Heart left ventricle (tissue), 16 donors: ENCODE measurements at regions of chr5 and their contacts with region 1.

Region 1: DNA sequence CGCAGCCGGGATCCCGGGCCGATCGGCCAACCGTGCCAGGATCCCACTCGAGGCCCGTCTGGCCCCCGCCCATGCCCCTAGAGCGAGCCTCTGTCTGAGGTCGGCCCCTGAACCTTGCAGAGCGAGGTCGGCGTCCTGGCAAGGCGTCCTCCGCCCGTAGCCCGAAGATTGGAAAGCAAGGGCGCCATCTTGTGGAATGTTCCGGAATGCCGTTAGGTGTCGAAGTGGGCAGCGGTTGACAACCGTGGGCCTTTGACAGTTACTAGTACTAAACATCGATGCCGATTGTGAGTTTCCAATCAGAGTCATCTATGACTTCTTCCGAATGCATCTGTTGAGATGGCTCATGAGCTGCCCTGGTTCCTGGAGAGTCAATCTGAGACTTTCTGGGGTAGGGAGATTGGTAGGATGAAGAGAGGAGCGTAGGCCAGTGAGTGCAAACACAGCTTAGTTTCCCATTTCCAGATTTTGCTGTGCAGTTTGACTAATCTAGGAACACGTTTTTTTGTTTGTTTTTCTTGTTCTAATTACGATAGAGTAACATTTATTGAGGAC is 923 bp upstream of the PLK2 start:
- DNase-seq: peak; percentile 91 to 95 (median 93)
- ATAC-seq: peak; percentile 81 to 86 (median 82)
- H3K4me3 ChIP-seq: peak overlapping the region; percentile 59 to 97 (median 85)
- H3K27ac ChIP-seq: peak overlapping the region; percentile 93 to 99 (median 98)
- H3K4me1 ChIP-seq: peaks cover 0 to 24% (median 9%) of the 10 kb centered on the region in 12 donors
- H3K27me3 ChIP-seq: no peaks in the 10 kb centered on the region
- CTCF ChIP-seq: peak; percentile 71 to 88 (median 82)
- POLR2A ChIP-seq: no peak

Region 2: GRCh38 chr5:56909294-56910209 is 1551.3 kb before region 1 on chr5 and contains the start of gene SETD9:
- intact Hi-C with region 1: loop called in 1 of 10 experiments (anchors 10 kb)
- DNase-seq: peak; percentile 99 to 100 (median 99)
- ATAC-seq: peak; percentile 95 to 97 (median 97)
- H3K4me3 ChIP-seq: peak within 1 kb of the TSS; percentile 51 to 86 (median 68)
- H3K27ac ChIP-seq: peak within 1 kb of the TSS; percentile 85 to 99 (median 95)
- H3K4me1 ChIP-seq: peaks cover 0 to 16% (median 9%) of the 10 kb centered on the region in 12 donors
- H3K27me3 ChIP-seq: no peaks in the 10 kb centered on the region
- CTCF ChIP-seq: no peak
- POLR2A ChIP-seq: peak; percentile 28 to 75
- total RNA-seq, gene SETD9: 8.6 to 21.0 (median 14.0) TPM

Region 3: GRCh38 chr5:57662991-57663390 is 797.8 kb before region 1 on chr5:
- intact Hi-C with region 1: loop called in 2 of 10 experiments (anchors 5 kb)
- DNase-seq: peak in 3 of 5 donors; percentile 32 to 60 (median 43)
- ATAC-seq: peak; percentile 81 to 94 (median 92)
- H3K4me3 ChIP-seq: no peak overlapping the region
- H3K27ac ChIP-seq: peak overlapping the region; percentile 6 to 85 (median 64)
- H3K4me1 ChIP-seq: peaks cover 0 to 27% (median 5%) of the 10 kb centered on the region in 12 donors
- H3K27me3 ChIP-seq: no peaks in the 10 kb centered on the region
- CTCF ChIP-seq: peak in 3 of 12 donors; percentile 7 to 34 (median 25)
- POLR2A ChIP-seq: no peak

Region 4: DNA sequence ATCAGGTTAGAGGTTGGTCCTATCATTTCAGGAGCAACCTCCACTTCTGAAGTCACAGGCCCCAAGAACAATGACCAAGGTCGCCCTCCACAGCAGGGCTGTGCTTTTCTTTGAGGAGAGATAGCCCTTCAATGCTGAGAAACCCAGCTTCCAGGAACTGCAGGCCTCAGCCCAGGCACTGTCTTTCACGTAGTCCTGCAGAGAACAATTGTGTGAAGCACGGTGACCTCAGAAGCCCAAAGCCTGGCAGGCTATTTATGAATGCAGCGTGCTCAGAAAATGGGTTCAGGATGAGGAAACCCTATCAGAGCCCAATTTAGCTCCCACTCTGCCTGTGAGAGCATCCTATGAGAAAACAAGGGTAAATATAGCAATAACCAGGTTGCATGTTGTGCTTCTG is 389.2 kb before region 1 on chr5:
- intact Hi-C with region 1: loop called in 8 of 10 experiments (anchors 2 to 10 kb)
- DNase-seq: peak; percentile 54 to 86 (median 79)
- ATAC-seq: peak; percentile 94 to 98 (median 97)
- H3K4me3 ChIP-seq: no peak overlapping the region
- H3K27ac ChIP-seq: peak overlapping the region; percentile 3 to 85 (median 78)
- H3K4me1 ChIP-seq: peaks cover 6 to 60% (median 46%) of the 10 kb centered on the region in 12 donors
- H3K27me3 ChIP-seq: no peaks in the 10 kb centered on the region
- CTCF ChIP-seq: no peak
- POLR2A ChIP-seq: no peak

Region 5: DNA sequence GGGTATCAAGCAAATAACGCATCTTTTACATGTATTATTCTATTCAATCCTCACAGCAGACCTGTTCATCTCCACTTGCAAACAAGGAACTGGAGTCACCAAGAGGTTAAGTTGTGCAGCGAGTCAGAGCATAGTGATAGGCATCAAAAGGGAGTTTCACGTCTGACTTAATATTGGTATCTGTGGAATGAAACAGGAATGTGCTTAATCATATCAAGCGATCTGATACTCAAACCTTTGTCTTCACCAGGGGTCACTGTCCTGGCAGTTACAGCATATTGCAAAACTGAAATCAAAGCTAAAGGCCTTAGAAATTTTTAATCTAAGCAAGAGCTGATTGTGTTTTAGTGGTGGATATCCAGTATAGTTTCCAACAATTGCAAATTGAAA is 272.6 kb before region 1 on chr5:
- intact Hi-C with region 1: loop called in 2 of 10 experiments (anchors 2 to 10 kb)
- DNase-seq: no peak
- ATAC-seq: peak in 2 of 4 donors; percentile 18 to 24
- H3K4me3 ChIP-seq: peak overlapping the region in 1 of 12 donors; percentile 14
- H3K27ac ChIP-seq: peak overlapping the region in 3 of 12 donors; percentile 9 to 20 (median 15)
- H3K4me1 ChIP-seq: peaks cover 0 to 18% (median under 1%) of the 10 kb centered on the region in 12 donors
- H3K27me3 ChIP-seq: no peaks in the 10 kb centered on the region
- CTCF ChIP-seq: peak in 4 of 12 donors; percentile 7 to 27 (median 20)
- POLR2A ChIP-seq: no peak

Region 6: GRCh38 chr5:58246461-58246944 is 214.3 kb before region 1 on chr5:
- intact Hi-C with region 1: loop called in 5 of 10 experiments (anchors 5 to 10 kb)
- DNase-seq: no peak
- ATAC-seq: peak in 3 of 4 donors; percentile 35 to 69 (median 40)
- H3K4me3 ChIP-seq: no peak overlapping the region
- H3K27ac ChIP-seq: peak overlapping the region in 9 of 12 donors; percentile 30 to 84 (median 56)
- H3K4me1 ChIP-seq: peaks cover 0 to 48% (median 10%) of the 10 kb centered on the region in 12 donors
- H3K27me3 ChIP-seq: no peaks in the 10 kb centered on the region
- CTCF ChIP-seq: no peak
- POLR2A ChIP-seq: no peak

Region 7: DNA sequence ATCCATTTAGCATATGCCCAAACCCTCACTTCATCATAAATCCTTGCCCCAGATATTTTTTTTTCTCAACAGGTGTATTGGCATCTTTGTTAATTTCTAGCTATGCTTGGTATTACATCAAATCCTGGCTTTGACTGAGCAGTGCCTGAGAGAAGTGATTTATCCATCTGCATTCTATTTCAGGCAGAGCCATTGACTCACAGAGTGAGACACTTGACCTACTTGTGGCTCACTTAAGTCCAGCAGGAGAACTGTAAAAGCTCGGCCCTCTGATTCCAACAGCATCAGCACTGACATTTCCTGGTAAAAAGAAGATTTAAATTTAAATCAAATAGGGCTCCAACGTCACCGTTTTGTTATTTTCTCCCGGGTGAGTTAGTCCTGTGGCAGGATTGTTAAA is 94.3 kb before region 1 on chr5:
- intact Hi-C with region 1: loop called in 2 of 10 experiments (anchors 10 kb)
- DNase-seq: peak in 1 of 5 donors; percentile 26
- ATAC-seq: peak; percentile 82 to 96 (median 91)
- H3K4me3 ChIP-seq: no peak overlapping the region
- H3K27ac ChIP-seq: peak overlapping the region in 9 of 12 donors; percentile 4 to 76 (median 55)
- H3K4me1 ChIP-seq: peaks cover 0 to 17% (median 0%) of the 10 kb centered on the region in 12 donors
- H3K27me3 ChIP-seq: no peaks in the 10 kb centered on the region
- CTCF ChIP-seq: no peak
- POLR2A ChIP-seq: no peak